AG04449 (cell line): ENCODE measurements at regions of chr11 and their contacts with region 1.

Region 1: DNA sequence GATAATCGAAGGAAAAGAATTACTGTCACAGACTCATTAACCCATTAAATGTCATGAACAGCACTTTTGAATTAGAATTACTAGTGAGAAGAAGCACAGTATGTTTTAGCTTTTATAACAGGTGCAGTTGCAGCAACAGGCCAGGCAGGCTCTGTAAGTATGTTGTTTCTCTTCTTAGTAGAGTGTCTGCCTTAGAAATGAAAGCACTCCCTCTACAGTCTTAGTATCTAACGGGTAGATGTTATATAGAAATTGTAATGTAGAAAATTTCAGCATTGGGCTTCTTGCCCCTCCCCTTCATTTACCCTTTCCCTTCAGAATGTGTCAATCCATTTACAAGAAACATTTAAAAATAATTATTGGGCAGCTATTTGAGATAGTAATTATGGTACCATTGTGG is 87.4 kb downstream of the HIPK3 start:
- DNase-seq: no peak
- H3K4me3 ChIP-seq: no peak overlapping the region
- CTCF ChIP-seq: no peak

Region 2: GRCh38 chr11:33329705-33330329 is 14.8 kb before region 1 on chr11:
- CTCF ChIA-PET with region 1: interaction called, 81 read pairs
- POLR2A ChIA-PET with region 1: no interaction called
- DNase-seq: no peak
- H3K4me3 ChIP-seq: no peak overlapping the region
- CTCF ChIP-seq: peak; percentile 52

Region 3: DNA sequence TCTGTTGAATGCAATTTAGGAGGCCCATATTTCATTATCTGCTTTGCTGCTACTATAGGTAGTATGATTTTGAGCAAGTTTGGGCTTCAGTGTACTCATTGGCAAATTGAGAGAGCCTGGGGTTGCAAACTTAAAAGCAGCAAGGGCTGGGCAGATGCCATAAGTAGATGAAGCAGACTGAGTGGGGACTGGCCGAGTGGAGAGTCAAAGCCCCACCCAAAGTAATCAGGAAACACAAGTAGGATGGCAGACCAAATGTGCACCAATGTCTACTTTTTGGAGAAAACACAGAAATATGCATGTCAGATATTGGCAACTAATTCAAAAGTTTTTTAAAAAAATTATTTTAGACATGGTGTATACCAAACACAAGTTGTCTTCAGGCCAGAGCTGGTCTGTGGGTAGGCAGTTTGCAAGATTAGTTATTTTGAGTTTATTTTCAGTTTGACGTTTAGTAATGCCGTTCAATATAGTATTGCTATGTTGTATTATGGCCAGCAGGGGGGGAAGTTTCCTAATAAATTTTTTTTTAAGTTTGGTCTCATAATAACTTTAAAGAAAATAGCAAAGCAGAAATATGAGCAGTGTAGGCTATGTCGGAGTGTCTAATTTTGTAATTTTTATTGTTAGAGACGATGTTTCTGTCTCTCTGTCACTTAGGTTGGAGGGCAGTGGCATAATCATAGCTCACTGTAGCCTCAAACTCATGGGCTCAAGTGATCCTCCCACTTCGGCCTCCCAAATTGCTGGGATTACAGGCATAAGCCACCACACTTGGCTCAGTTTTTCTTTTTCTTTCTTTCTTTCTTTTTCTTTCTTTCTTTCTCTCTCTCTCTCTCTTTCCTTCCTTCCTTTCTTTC is 17.7 kb after region 1 on chr11:
- CTCF ChIA-PET with region 1: interaction called, 12 read pairs
- POLR2A ChIA-PET with region 1: no interaction called
- DNase-seq: no peak
- H3K4me3 ChIP-seq: no peak overlapping the region
- CTCF ChIP-seq: no peak